Cardiac septum (tissue), 1 donor: ENCODE measurements at regions of chr17 and their contacts with region 1.

Region 1: DNA sequence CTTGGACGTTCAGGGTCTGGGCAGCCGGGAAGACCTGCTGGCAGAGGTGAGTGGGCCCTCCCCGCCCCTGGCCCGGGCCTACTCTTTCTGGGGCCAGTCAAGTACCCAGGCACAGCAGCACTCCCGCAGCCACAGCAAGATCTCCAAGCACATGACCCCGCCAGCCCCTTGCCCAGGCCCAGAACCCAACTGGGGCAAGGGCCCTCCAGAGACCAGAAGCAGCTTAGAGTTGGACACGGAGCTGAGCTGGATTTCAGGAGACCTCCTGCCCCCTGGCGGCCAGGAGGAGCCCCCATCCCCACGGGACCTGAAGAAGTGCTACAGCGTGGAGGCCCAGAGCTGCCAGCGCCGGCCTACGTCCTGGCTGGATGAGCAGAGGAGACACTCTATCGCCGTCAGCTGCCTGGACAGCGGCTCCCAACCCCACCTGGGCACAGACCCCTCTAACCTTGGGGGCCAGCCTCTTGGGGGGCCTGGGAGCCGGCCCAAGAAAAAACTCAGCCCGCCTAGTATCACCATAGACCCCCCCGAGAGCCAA is 8.6 kb upstream of the ABCC3 start:
- DNase-seq: no peak

Region 2: DNA sequence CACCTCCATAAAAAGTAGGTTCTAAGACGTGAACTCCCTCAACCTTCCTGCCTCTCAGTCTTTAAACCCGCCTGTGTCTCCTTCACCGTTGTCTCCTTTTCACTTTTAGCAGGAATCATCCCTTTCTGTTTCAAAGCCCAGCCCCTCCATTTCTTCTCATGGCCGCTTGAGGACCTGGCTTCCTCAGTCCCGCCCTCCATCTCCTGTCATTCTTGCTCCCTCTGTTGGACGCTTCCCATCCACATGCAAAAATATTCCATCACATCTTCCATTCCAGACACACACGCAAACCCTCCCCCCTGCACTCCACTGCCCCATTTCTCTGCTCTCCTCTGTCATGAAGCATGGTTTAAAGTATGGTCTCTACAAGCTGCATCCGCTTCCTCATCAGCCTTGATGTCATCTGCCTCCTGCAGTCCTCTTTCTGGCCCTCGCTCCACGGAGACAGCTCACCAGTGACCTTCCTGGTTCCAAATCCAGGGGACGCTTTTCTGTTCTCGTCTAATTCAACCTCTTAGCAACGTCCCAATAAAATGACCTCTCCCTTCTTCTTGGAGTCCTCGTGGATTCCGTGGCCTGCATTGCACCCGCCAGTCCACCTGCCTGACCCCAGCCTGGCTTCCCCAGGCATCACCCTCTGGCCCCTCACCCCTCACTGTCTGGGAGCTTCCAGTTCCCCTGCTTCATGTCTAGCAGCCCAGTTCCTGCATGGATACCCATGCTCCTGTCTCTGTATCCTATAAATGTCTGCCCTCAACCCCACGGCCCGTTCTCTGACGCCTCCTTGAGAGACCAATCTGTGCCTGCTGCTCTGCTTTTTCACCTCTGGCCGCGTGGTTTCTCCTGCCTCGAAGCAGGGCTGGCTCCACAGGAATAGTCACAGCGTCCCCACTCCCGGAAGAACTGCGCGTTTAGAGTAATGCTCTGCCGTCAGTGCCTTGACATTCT is 55.4 kb after region 1 on chr17:
- intact Hi-C with region 1: loop called (anchors 2 kb)
- DNase-seq: no peak

Region 3: DNA sequence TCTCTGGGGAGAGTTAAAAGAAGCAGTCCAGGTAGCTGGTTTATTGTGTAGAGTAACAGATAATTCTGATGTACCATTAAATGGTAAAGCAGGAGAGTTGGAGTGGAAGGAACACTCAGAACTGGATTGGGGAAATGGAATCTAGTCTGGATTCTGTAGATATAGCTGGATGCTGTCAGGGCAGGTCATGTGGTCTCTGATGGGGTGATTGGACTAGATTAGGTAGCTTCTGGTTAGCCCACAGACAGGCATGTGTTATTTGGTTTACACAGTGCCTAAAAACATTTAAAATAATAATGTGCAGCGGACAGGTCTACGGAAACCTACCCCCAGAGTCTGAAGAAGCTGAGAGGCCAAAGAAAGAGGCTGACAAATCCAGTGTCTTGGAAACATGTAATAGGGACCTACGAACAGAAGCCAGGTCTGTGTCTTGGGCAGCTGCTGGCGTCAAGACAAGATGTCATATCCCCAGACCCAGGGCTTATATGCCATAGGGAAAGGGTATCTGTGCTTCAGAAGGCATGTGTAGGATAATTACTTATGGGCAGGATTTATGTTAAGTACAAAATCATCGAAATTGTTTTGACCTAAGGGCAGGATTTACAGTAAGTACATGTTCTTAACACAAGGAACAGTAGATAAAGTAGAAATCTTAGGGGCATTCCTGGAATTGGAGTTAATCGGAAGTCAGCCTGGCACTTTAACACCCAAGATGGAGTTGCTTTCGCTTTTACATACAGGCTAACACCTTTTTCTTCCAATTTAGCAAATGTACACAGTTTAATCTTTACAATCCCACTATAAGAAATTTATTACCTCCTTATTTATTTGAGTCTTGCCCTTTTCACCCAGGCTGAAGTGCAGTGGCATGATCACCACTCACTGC is 105.7 kb after region 1 on chr17:
- intact Hi-C with region 1: no loop called
- DNase-seq: no peak